ENCODE measurements at regions of chr20 and their contacts with region 1.

Region 1: GRCh38 chr20:33611106-33611505 is 51.0 kb upstream of the C20orf144 start:
- DNase-seq: no peak
- ATAC-seq: no peak
- H3K4me3 ChIP-seq: no peak overlapping the region
- H3K27ac ChIP-seq: no peak overlapping the region
- H3K4me1 ChIP-seq: no peaks in the 10 kb centered on the region
- H3K27me3 ChIP-seq: no peaks in the 10 kb centered on the region
- CTCF ChIP-seq: no peak
- POLR2A ChIP-seq: no peak
- RAD21 ChIP-seq: no peak

Region 2: DNA sequence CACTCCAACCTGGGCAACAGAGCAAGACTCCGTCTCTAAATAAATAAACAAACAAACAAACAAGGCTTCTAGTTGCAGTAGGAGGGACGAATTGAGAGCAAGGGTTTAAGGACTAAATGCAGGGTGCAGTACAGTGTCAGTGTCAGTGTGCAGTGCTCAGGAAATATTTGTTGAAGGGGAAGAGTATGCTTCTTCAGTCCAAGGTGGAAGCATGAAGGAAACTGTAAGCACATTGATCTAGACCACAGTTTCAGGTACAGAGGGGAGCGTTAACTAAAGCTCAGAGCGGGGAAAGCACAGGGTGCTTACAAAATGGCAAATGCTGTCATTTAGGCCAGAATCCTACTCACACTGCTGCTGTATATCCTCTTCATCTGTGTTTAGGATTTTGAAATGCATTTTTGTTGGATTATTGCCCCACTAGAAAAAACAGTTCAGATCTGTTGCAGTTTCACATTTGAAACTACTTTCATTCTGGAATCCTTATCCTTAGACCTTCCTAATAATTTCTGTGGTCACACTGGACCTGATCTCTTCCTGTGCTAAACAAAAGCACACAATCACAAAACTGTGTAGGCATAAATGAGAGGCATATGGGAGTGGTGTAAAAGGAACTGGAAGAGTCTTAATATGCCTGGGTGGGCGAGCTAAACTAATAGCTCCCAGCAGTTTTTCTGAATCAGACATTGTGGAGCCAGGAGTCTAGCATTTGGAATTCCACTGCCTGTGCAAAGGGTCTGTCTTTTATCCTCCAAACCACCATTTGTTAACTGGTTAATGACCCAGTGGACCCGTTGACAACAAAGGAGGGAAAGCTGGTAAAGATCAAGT is 79.8 kb before region 1 on chr20:
- CTCF ChIA-PET with region 1: no interaction called
- POLR2A ChIA-PET with region 1: no interaction called
- dilution Hi-C with region 1: no loop called
- in situ Hi-C with region 1: no loop called
- intact Hi-C with region 1: no loop called
- DNase-seq: peak; percentile 51
- ATAC-seq: peak; percentile 74
- H3K4me3 ChIP-seq: peak overlapping the region; percentile 26; the same call in 1 of the 2 replicates
- H3K27ac ChIP-seq: peak overlapping the region; percentile 56; the same call in 1 of the 2 replicates
- H3K4me1 ChIP-seq: peaks cover 21% of the 10 kb centered on the region
- H3K27me3 ChIP-seq: no peaks in the 10 kb centered on the region
- CTCF ChIP-seq: no peak
- POLR2A ChIP-seq: no peak
- RAD21 ChIP-seq: no peak

Region 3: GRCh38 chr20:33600414-33600813 is 10.7 kb before region 1 on chr20:
- CTCF ChIA-PET with region 1: interaction called, 10 read pairs
- POLR2A ChIA-PET with region 1: interaction called, 9 read pairs
- dilution Hi-C with region 1: no loop called
- in situ Hi-C with region 1: no loop called
- intact Hi-C with region 1: no loop called
- DNase-seq: no peak
- ATAC-seq: no peak
- H3K4me3 ChIP-seq: no peak overlapping the region
- H3K27ac ChIP-seq: no peak overlapping the region
- H3K4me1 ChIP-seq: peaks cover 1% of the 10 kb centered on the region; the same call in 1 of the 2 replicates
- H3K27me3 ChIP-seq: no peaks in the 10 kb centered on the region
- CTCF ChIP-seq: no peak
- POLR2A ChIP-seq: no peak
- RAD21 ChIP-seq: no peak